T-cell (primary cell): ENCODE measurements at regions of chr7 and their contacts with region 1.

Region 1: GRCh38 chr7:133572849-133573248 is 320.0 kb downstream of the EXOC4 start:
- DNase-seq: no peak
- ATAC-seq: no peak
- H3K4me3 ChIP-seq: no peak overlapping the region
- H3K4me3 Mint-ChIP-seq: no peak overlapping the region
- H3K27ac ChIP-seq: no peak overlapping the region
- H3K27ac Mint-ChIP-seq: no peak overlapping the region
- H3K4me1 ChIP-seq: peaks cover 0 to 3% of the 10 kb centered on the region in 2 experiments
- H3K4me1 Mint-ChIP-seq: no peaks in the 10 kb centered on the region
- H3K27me3 ChIP-seq: no peaks in the 10 kb centered on the region
- H3K27me3 Mint-ChIP-seq: no peaks in the 10 kb centered on the region

Region 2: GRCh38 chr7:132825932-132826835 is 746.7 kb before region 1 on chr7:
- CTCF ChIA-PET with region 1: no interaction called
- POLR2A ChIA-PET with region 1: interaction called in 1 of 2 experiments, 10 read pairs
- DNase-seq: no peak
- ATAC-seq: no peak
- H3K4me3 ChIP-seq: no peak overlapping the region
- H3K4me3 Mint-ChIP-seq: no peak overlapping the region
- H3K27ac ChIP-seq: no peak overlapping the region
- H3K27ac Mint-ChIP-seq: no peak overlapping the region
- H3K4me1 ChIP-seq: no peaks in the 10 kb centered on the region
- H3K4me1 Mint-ChIP-seq: peaks cover 17 to 28% (median 18%) of the 10 kb centered on the region in 3 donors
- H3K27me3 ChIP-seq: no peaks in the 10 kb centered on the region
- H3K27me3 Mint-ChIP-seq: no peaks in the 10 kb centered on the region